Right ventricle myocardium superior (tissue), 1 donor: ENCODE measurements at regions of chr15 and their contacts with region 1.

Region 1: DNA sequence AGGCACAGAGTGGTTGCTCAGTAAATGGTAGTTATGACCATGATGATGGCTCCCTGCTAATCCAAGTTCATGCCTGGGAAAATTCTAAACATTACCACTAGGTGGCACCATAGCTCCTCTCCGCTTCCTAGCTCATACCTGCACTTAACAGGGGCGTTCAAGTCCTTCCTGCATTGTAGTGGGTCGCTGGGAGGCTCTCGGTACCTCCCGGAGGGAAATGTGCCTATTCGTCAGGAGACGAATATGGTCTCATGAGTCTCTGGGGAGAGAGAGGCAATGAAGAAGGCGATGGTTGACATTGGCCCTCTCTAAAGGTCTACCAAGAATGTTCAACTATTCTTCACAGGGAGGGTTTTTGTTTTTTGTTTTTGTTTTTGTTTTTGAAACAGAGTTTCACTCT is 10.9 kb downstream of the MESP1 start:
- DNase-seq: no peak
- ATAC-seq: peak; percentile 92

Region 2: GRCh38 chr15:89647191-89647851 is 92.8 kb before region 1 on chr15:
- intact Hi-C with region 1: loop called (anchors 10 kb)
- DNase-seq: peak; percentile 91
- ATAC-seq: peak; percentile 84

Region 3: GRCh38 chr15:90086868-90087268 is 346.7 kb after region 1 on chr15:
- intact Hi-C with region 1: loop called (anchors 5 kb)
- DNase-seq: peak; percentile 57
- ATAC-seq: no peak